B cell (primary cell): ENCODE measurements at regions of chr6 and their contacts with region 1.

Region 1: DNA sequence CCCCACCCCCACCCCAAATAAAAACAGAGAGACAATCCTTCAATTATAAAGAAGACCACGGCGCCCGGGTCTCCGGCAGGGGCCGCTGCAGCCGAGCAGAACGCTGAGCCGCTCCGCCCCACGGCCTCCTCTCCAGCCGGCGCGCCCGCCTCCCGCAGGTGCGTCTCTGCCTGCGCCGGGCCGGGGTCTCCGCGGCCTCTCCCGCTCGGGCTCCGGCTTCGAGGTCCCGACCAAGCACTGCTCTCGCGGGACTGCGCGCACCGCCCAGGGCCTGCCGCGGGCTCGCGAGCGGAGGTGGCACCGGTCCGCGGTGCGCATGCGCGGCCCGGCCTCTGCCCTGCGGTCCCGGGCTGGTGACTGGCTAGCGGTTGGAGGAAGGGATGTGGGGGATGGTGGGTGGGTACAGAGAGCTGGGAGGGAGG is 241 bp upstream of the SIRT5 start:
- DNase-seq: peak; percentile 99
- ATAC-seq: peak; percentile 89
- H3K4me3 ChIP-seq: peak overlapping the region in 4 of 5 experiments; percentile 80 to 99 (median 84)
- H3K4me3 Mint-ChIP-seq: peak overlapping the region; percentile 95
- H3K27ac ChIP-seq: peak overlapping the region; percentile 87 to 94
- H3K27ac Mint-ChIP-seq: peak overlapping the region; percentile 98
- H3K4me1 ChIP-seq: peaks cover 15 to 16% of the 10 kb centered on the region in 2 donors
- H3K4me1 Mint-ChIP-seq: peaks cover 27% of the 10 kb centered on the region
- H3K27me3 ChIP-seq: no peaks in the 10 kb centered on the region
- H3K27me3 Mint-ChIP-seq: no peaks in the 10 kb centered on the region
- CTCF ChIP-seq: peak; percentile 48

Region 2: DNA sequence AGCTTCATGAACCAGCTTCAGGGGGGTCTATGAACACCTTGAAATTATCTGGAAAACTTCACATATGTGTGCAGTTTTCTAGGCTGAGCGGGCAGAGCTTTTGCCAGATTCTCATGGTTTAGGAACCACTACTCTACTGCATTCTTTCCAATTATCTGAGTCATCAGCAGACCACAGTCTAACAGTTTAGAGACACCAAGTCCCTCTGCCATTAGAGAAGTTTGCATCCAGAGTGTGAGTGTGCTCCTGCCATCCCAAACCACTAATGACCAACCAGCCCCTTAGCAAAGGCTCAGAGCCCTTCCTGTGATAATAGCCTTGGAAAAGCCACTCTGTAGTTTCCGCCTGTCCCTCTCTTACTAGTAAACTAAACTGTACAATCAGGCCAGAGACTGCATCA is 760.8 kb before region 1 on chr6:
- CTCF ChIA-PET with region 1: no interaction called
- POLR2A ChIA-PET with region 1: no interaction called
- intact Hi-C with region 1: no loop called
- DNase-seq: no peak
- ATAC-seq: no peak
- H3K4me3 ChIP-seq: no peak overlapping the region
- H3K4me3 Mint-ChIP-seq: no peak overlapping the region
- H3K27ac ChIP-seq: no peak overlapping the region
- H3K27ac Mint-ChIP-seq: no peak overlapping the region
- H3K4me1 ChIP-seq: no peaks in the 10 kb centered on the region
- H3K4me1 Mint-ChIP-seq: no peaks in the 10 kb centered on the region
- H3K27me3 ChIP-seq: peaks cover 0 to 3% (median 0%) of the 10 kb centered on the region in 4 experiments
- H3K27me3 Mint-ChIP-seq: peaks cover 18% of the 10 kb centered on the region
- CTCF ChIP-seq: no peak

Region 3: DNA sequence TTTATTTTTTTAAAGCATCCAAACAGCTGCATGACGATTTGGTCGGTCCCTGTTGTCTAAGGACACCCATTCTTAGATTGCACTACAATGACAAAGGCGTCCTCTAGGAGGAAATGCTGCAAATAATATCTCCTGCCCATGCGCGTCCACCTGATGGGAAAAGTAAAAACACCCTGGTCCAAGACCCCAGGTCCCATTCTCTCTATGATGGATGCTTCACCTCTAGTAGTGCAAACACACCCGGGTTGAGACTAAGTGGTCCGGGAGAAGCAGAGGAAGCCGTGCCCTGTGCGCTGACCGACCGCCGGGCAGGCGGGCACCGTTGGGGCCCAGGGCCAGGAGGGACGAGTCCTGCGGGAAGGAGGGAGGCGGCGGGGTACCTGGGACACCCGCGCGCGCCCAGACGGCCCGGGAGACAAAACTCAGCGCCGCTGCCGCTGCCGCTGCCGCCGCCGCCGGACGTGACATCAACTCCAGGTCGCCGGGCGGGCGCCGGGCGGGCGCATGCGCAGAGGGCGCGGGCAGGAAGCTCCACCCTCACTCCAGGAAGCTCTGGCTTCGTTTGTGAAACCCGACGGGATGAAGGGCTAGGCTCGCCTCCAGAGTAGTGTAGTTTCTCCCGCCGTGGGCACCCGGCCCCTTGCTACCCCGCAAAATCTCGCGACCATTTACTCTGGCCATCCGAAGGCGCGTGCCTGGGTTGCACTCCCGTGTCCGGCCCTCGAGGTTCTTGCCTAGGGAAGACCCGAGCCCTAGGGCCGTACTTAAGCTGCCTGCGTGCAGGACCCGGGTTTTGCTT is 245.9 kb before region 1 on chr6 and contains the start of gene TBC1D7:
- CTCF ChIA-PET with region 1: interaction called, 41 read pairs
- POLR2A ChIA-PET with region 1: no interaction called
- intact Hi-C with region 1: loop called (anchors 2 kb)
- DNase-seq: peak; percentile 95
- ATAC-seq: peak; percentile 86
- H3K4me3 ChIP-seq: peak within 1 kb of the TSS; percentile 69 to 98 (median 88)
- H3K4me3 Mint-ChIP-seq: peak within 1 kb of the TSS; percentile 98
- H3K27ac ChIP-seq: peak within 1 kb of the TSS; percentile 86 to 92
- H3K27ac Mint-ChIP-seq: peak within 1 kb of the TSS; percentile 98
- H3K4me1 ChIP-seq: peaks cover 10 to 15% of the 10 kb centered on the region in 2 donors
- H3K4me1 Mint-ChIP-seq: peaks cover 32% of the 10 kb centered on the region
- H3K27me3 ChIP-seq: no peaks in the 10 kb centered on the region
- H3K27me3 Mint-ChIP-seq: no peaks in the 10 kb centered on the region
- CTCF ChIP-seq: no peak
- total RNA-seq, gene TBC1D7: 22.3 and 26.0 TPM in 2 replicates

Region 4: DNA sequence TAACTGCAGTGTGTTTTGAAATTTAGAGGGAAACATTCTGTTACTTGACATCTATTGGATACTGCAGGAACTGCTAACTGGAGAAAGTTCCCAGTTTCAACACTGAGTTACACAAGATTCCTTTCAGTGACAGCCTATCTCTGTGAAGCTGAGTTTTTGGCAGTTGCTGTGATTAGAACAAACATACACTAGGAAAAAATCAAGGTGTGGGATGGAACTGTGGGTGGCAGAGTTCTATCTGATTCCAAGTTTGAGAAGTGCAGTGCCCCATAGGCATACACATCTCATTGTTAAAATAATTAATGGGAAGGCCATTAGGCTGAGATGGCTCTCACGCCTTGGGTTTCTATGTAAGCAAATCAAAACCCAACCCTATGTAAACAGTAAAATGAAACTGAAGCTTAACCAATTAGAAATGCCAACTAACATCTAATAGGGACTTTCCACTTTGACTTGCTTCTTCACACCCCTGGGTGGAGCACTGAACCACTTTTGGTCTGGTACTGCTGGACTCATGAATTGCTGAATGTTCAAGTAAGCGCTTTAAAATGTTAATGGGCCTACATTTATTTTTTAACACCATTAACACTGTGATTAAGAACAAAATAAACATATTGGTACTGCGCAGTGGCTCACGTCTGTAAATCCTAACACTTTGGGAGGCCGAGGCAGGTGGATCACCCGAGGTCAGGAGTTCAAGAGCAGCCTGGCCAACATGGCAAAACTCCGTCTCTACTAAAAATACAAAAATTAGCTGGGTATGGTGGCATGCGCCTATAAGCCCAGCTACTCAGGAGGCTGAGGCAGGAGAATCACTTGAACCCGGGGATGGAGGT is 190.6 kb before region 1 on chr6:
- CTCF ChIA-PET with region 1: interaction called, 19 read pairs
- POLR2A ChIA-PET with region 1: interaction called, 4 read pairs
- intact Hi-C with region 1: loop called (anchors 2 kb)
- DNase-seq: peak; percentile 83
- ATAC-seq: peak; percentile 96
- H3K4me3 ChIP-seq: no peak overlapping the region
- H3K4me3 Mint-ChIP-seq: peak overlapping the region; percentile 55
- H3K27ac ChIP-seq: peak overlapping the region; percentile 70 to 84
- H3K27ac Mint-ChIP-seq: peak overlapping the region; percentile 92
- H3K4me1 ChIP-seq: peaks cover 36 to 42% of the 10 kb centered on the region in 2 donors
- H3K4me1 Mint-ChIP-seq: peaks cover 73% of the 10 kb centered on the region
- H3K27me3 ChIP-seq: no peaks in the 10 kb centered on the region
- H3K27me3 Mint-ChIP-seq: no peaks in the 10 kb centered on the region
- CTCF ChIP-seq: peak; percentile 53

Region 5: DNA sequence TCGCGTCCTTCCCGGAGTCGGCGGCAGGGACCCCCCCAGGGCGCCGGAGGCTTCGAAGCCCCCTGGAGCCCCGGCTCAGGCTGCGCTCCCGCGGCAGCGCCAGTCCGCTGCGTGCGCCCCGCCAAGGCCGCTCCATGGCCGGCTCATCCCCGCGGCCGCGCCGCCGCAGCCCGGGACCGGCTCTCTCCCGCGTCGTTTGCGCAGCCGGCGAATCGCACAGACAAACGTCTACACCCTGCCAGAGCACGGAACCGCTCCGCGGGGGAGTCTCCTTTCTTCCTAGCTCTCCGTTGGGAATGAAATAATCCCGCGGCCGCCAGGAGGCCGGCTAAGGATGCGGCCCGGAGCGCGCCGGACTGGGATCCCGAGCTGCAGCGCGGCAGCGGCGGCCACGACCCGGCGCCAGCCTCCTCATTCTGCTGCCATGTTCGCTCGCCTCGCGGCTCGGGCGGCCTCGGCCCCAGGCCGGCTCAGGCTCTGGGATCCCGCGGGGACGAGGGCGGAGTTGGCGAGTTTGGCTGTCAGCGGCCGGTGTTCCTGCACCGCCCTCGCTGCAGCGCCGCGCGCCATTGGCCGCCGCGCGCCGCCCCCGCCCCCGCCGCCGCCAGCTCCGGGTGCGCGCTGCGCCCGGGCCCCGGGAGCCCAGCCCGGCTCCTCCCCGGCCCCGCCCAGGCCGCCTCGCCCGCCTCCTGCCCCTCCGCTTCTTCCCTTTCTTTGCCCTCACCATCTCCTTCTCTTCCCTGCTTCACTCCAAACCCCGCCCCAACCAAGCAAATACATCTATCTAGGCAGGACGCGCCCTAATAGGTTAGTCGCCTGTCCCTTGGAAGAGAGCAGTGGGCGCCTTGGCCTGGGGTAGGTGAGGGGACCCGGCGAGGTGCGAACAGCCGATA is 86.8 kb before region 1 on chr6 and contains the start of gene GFOD1:
- CTCF ChIA-PET with region 1: interaction called, 23 read pairs
- POLR2A ChIA-PET with region 1: interaction called, 15 read pairs
- intact Hi-C with region 1: loop called (anchors 1 kb)
- DNase-seq: peak; percentile 89
- ATAC-seq: peak; percentile 81
- H3K4me3 ChIP-seq: peak within 1 kb of the TSS; percentile 51 to 73 (median 66)
- H3K4me3 Mint-ChIP-seq: peak within 1 kb of the TSS; percentile 95
- H3K27ac ChIP-seq: peak within 1 kb of the TSS; percentile 57 to 60
- H3K27ac Mint-ChIP-seq: peak within 1 kb of the TSS; percentile 97
- H3K4me1 ChIP-seq: peaks cover 19 to 38% of the 10 kb centered on the region in 2 donors
- H3K4me1 Mint-ChIP-seq: peaks cover 42% of the 10 kb centered on the region
- H3K27me3 ChIP-seq: no peaks in the 10 kb centered on the region
- H3K27me3 Mint-ChIP-seq: no peaks in the 10 kb centered on the region
- CTCF ChIP-seq: no peak
- total RNA-seq, gene GFOD1: 42.4 and 44.6 TPM in 2 replicates

Region 6: GRCh38 chr6:13559251-13559650 is 14.9 kb before region 1 on chr6:
- CTCF ChIA-PET with region 1: interaction called, 19 read pairs
- POLR2A ChIA-PET with region 1: no interaction called
- intact Hi-C with region 1: no loop called
- DNase-seq: no peak
- ATAC-seq: no peak
- H3K4me3 ChIP-seq: no peak overlapping the region
- H3K4me3 Mint-ChIP-seq: no peak overlapping the region
- H3K27ac ChIP-seq: no peak overlapping the region
- H3K27ac Mint-ChIP-seq: no peak overlapping the region
- H3K4me1 ChIP-seq: no peaks in the 10 kb centered on the region
- H3K4me1 Mint-ChIP-seq: no peaks in the 10 kb centered on the region
- H3K27me3 ChIP-seq: no peaks in the 10 kb centered on the region
- H3K27me3 Mint-ChIP-seq: peaks cover 2% of the 10 kb centered on the region
- CTCF ChIP-seq: no peak

Region 7: GRCh38 chr6:13624871-13625288 is 50.7 kb after region 1 on chr6:
- CTCF ChIA-PET with region 1: interaction called, 7 read pairs
- POLR2A ChIA-PET with region 1: no interaction called
- intact Hi-C with region 1: loop called (anchors 2 kb)
- DNase-seq: peak; percentile 57
- ATAC-seq: peak; percentile 51
- H3K4me3 ChIP-seq: no peak overlapping the region
- H3K4me3 Mint-ChIP-seq: no peak overlapping the region
- H3K27ac ChIP-seq: peak overlapping the region in 1 of 2 donors; percentile 42
- H3K27ac Mint-ChIP-seq: peak overlapping the region; percentile 77
- H3K4me1 ChIP-seq: no peaks in the 10 kb centered on the region
- H3K4me1 Mint-ChIP-seq: peaks cover 5% of the 10 kb centered on the region
- H3K27me3 ChIP-seq: no peaks in the 10 kb centered on the region
- H3K27me3 Mint-ChIP-seq: no peaks in the 10 kb centered on the region
- CTCF ChIP-seq: peak; percentile 40